Heart right ventricle (tissue), 16 donors: ENCODE measurements at regions of chr10 and their contacts with region 1.

Region 1: DNA sequence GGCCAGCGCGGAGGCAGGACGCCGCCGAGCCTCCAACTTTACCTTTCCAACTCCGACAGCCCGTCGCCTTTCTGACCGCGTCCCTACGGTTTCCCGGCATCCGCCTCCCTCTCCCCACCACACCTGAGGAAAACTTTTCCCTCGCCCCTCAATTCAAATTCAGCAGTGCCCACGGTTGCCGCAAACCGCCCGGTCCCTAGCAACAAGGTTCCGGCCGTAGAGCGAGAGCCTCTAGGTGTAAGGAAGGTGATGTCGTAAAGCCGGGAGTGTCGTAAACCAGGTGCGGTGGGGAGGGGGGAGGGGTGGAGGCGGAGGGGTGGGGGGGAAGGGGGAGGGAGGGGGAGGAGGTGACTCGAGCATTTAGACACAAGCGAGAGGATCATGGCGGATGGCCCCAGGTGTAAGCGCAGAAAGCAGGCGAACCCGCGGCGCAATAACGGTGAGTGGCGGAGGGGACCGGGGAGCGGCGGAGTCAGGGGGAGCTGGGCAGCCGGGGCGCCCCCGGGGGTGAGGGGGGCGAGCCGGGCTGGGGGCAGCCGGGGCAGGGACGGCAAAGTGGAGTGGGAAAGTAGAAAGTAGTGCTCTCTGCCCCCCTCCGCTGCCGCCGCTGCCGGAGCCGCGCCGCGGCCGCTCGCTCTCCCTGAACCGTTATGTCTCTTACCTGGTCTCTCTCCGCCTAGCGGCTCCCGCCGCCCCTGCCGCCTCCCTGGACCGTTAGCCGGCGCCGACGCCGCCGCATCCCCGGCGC is at the start of gene ZEB1:
- DNase-seq: peak; percentile 76 to 93
- ATAC-seq: peak; percentile 64 to 89 (median 72)
- H3K4me3 ChIP-seq: peak within 1 kb of the TSS; percentile 84 to 96 (median 92)
- H3K27ac ChIP-seq: peak within 1 kb of the TSS; percentile 89 to 99 (median 97)
- H3K4me1 ChIP-seq: peaks cover 0 to 58% (median 27%) of the 10 kb centered on the region in 9 donors
- H3K27me3 ChIP-seq: peaks cover 0 to 22% (median 0%) of the 10 kb centered on the region in 7 donors
- CTCF ChIP-seq: peak; percentile 26 to 67 (median 54)
- total RNA-seq, gene ZEB1: 87.4 to 125 (median 102) TPM

Region 2: GRCh38 chr10:30783939-30784500 is 535.0 kb before region 1 on chr10:
- intact Hi-C with region 1: loop called (anchors 2 to 10 kb)
- DNase-seq: peak; percentile 90 to 91
- ATAC-seq: peak; percentile 77 to 90 (median 86)
- H3K4me3 ChIP-seq: peak overlapping the region; percentile 51 to 96 (median 75)
- H3K27ac ChIP-seq: peak overlapping the region; percentile 94 to 100 (median 98)
- H3K4me1 ChIP-seq: peaks cover 0 to 46% (median 12%) of the 10 kb centered on the region in 9 donors
- H3K27me3 ChIP-seq: no peaks in the 10 kb centered on the region
- CTCF ChIP-seq: peak; percentile 62 to 90 (median 87)

Region 3: DNA sequence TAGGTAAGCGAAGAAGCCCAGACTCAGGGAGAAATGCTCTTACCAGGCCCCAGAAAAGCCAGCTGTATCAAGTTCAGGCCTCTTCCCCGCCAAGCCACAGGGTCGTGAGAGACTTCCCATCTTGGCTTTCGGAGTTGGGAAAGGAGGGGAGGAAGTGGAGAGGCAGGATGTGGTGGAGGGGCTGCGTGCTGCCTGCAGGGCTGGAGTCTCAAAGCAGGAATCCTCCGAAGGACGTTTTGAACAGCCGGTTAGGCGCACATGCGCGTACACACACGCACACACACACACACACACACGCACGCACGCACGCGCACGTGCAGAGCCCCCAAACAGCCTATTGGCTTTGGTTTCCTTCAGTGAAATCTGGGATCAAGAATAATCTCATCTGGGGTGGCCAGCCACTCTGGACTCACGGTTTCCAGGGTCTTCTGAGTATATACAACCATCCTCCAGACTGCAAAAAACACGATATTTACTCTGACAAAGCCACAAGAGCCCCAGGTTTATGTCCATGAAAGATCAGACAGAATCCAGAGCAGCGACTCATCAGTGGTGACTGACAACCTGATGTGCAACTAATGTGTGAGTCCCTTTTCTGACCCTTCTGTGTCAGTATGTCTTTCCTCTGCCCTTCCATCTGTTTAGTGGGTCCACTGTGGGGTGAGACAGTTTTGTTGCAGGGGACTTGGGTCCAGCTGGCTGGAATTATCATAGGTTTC is 172.4 kb before region 1 on chr10:
- intact Hi-C with region 1: loop called in 2 of 10 experiments (anchors 5 to 10 kb)
- DNase-seq: peak; percentile 60 to 84
- ATAC-seq: peak; percentile 72 to 94 (median 87)
- H3K4me3 ChIP-seq: peak overlapping the region in 3 of 10 donors; percentile 13 to 22 (median 21)
- H3K27ac ChIP-seq: peak overlapping the region in 9 of 10 donors; percentile 46 to 86 (median 63)
- H3K4me1 ChIP-seq: peaks cover 6 to 45% (median 23%) of the 10 kb centered on the region in 9 donors
- H3K27me3 ChIP-seq: no peaks in the 10 kb centered on the region
- CTCF ChIP-seq: no peak

Region 4: GRCh38 chr10:31204090-31204489 is 114.9 kb before region 1 on chr10:
- intact Hi-C with region 1: no loop called
- DNase-seq: peak in 1 of 2 donors; percentile 85
- ATAC-seq: peak; percentile 84 to 96 (median 90)
- H3K4me3 ChIP-seq: no peak overlapping the region
- H3K27ac ChIP-seq: peak overlapping the region in 5 of 10 donors; percentile 12 to 68 (median 46)
- H3K4me1 ChIP-seq: peaks cover 0 to 20% (median 12%) of the 10 kb centered on the region in 9 donors
- H3K27me3 ChIP-seq: no peaks in the 10 kb centered on the region
- CTCF ChIP-seq: no peak

Region 5: GRCh38 chr10:31467796-31468535 is 148.9 kb after region 1 on chr10:
- intact Hi-C with region 1: loop called in 1 of 10 experiments (anchors 10 kb)
- DNase-seq: peak in 1 of 2 donors; percentile 9
- ATAC-seq: peak in 7 of 8 donors; percentile 25 to 71 (median 64)
- H3K4me3 ChIP-seq: no peak overlapping the region
- H3K27ac ChIP-seq: no peak overlapping the region
- H3K4me1 ChIP-seq: no peaks in the 10 kb centered on the region
- H3K27me3 ChIP-seq: no peaks in the 10 kb centered on the region
- CTCF ChIP-seq: peak; percentile 20 to 60 (median 51)

Region 6: DNA sequence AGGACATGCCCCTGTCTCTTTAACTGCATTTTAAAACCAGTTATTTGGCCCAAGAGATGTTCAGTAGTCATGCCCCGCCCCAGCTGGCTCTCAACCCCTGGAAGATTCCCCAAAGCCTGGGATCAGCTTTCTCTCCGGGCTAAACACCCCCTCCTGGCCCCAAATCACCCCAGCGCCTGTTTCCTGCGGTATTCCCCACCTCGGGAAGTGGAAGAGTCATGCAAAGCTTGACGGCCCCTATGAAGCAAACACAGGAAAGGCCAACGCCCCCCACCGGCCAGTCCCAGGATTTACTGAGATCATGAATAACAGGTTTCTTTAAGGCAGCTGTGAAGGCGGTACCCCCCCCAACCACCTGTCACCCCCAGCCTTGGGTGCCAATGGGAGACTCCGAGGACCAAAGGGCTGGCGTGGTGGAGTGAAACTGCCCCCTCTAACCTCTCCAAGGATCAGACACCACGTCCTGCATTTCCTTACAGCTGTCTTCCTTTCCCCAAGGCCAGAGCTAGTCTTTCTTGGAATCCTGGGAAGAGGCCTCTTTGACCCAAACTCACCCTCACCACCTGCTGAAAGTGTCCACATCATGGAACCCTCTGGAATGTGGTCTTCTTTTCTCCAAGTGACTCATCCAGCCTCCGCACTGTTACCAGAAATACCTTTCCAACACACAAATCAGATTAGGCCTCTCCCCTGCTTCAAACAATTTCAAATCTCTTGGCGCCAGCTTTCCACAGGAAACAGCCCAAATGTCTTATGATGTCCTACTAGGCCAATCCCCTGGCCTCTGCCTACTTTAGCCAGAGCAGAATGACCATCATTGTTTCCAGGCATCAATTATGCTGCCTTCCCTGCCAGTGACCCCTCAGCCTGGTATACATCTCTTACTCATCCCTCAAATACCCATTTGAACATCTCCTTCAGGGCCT is 301.5 kb after region 1 on chr10:
- intact Hi-C with region 1: loop called in 2 of 10 experiments (anchors 10 kb)
- DNase-seq: peak; percentile 70 to 87
- ATAC-seq: peak; percentile 47 to 79 (median 65)
- H3K4me3 ChIP-seq: no peak overlapping the region
- H3K27ac ChIP-seq: peak overlapping the region in 9 of 10 donors; percentile 24 to 79 (median 64)
- H3K4me1 ChIP-seq: peaks cover 8 to 61% (median 37%) of the 10 kb centered on the region in 9 donors
- H3K27me3 ChIP-seq: no peaks in the 10 kb centered on the region
- CTCF ChIP-seq: peak in 8 of 9 donors; percentile 16 to 58 (median 42)

Region 7: DNA sequence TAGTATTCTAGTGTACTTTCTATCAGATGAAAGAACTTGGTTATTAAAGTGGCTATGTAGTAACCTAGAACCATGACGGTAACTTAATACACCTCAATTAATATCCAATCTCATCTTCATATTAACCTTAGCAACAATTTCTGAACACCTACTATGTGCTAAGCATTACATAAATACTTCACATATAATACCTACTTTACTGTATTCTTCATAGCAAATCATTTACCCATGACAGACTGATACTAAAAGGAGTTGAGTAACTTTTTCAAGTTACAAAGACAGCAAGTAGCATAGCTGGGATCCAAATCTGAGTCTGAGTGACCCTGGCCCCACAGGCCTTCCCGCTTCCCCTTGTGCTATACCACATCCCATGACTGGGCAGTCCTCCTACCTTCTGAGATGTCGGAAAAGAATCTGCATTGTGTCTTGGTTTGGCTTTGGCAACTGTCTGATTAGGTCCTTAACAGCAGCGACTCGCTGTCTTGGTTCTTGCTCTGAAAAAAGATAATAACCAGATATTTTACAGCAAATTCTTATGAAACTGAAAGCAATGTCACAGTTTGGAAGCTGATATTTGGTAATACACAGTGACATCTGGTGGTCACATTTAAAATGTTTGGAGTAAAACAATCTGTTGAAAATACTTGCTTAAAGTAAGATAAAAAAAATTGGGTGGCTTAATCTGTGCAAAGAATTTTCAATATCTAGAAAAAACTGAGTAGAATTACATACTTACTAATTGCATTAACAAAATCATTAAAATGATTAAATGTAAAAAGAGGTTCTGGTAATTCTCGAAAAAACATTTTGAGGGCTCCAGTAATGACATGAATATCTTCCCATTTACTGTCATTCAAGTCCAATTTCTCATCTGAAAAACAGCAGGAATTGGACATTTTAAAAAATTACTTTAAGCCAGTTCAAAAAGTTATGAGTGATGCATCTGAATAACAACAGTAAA is 489.5 kb after region 1 on chr10:
- intact Hi-C with region 1: loop called in 5 of 10 experiments (anchors 5 to 10 kb)
- DNase-seq: peak in 1 of 2 donors; percentile 39
- ATAC-seq: peak in 7 of 8 donors; percentile 75 to 90 (median 82)
- H3K4me3 ChIP-seq: peak overlapping the region in 9 of 10 donors; percentile 26 to 55 (median 47)
- H3K27ac ChIP-seq: peak overlapping the region; percentile 25 to 86 (median 77)
- H3K4me1 ChIP-seq: peaks cover 0 to 22% (median 11%) of the 10 kb centered on the region in 9 donors
- H3K27me3 ChIP-seq: no peaks in the 10 kb centered on the region
- CTCF ChIP-seq: peak; percentile 38 to 78 (median 66)